Activated CD4-positive, alpha-beta T cell treated with anti-CD3 and anti-CD28 coated beads for 36 hours (primary cell): ENCODE measurements at regions of chr1 and their contacts with region 1.

Region 1: GRCh38 chr1:201191653-201192260 is 1.1 kb downstream of the IGFN1 start:
- DNase-seq: peak; percentile 81
- ATAC-seq: peak; percentile 100
- H3K4me3 Mint-ChIP-seq: no peak overlapping the region
- H3K27ac Mint-ChIP-seq: no peak overlapping the region
- H3K4me1 Mint-ChIP-seq: peaks cover 4% of the 10 kb centered on the region
- H3K27me3 Mint-ChIP-seq: peaks cover 13% of the 10 kb centered on the region

Region 2: GRCh38 chr1:200992382-200993048 is 199.2 kb before region 1 on chr1:
- CTCF ChIA-PET with region 1: no interaction called
- POLR2A ChIA-PET with region 1: no interaction called
- intact Hi-C with region 1: no loop called
- DNase-seq: no peak
- ATAC-seq: no peak
- H3K4me3 Mint-ChIP-seq: no peak overlapping the region
- H3K27ac Mint-ChIP-seq: no peak overlapping the region
- H3K4me1 Mint-ChIP-seq: no peaks in the 10 kb centered on the region
- H3K27me3 Mint-ChIP-seq: no peaks in the 10 kb centered on the region

Region 3: DNA sequence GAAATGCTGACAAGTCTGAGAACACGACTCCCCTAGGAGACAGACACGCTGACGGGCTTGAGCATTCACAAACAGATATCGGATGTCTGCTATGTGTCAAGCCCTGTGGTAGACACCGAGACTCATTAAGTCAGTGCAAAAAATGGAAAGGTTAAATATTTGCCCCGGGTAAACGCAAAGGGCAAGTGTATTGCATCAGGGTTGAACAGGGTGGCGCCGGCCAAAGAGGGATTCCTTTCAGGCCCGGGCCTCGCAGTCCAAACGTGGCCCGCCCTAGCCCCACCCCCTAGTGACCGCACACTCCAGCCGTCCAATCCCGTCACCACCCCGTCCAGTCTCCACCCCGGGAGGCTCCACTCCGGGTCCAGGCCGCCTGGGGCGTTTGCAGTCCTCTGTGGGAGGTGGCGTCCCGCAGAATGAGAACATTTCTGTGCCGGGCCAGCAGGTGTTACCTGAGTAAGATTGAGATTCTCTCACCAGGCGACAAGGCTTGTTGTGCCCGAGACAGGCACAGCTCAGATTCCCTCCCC is 21.2 kb before region 1 on chr1:
- CTCF ChIA-PET with region 1: interaction called, 3 read pairs
- POLR2A ChIA-PET with region 1: interaction called, 9 read pairs
- intact Hi-C with region 1: loop called in 1 of 2 experiments (anchors 1 kb)
- DNase-seq: peak; percentile 92
- ATAC-seq: peak; percentile 83
- H3K4me3 Mint-ChIP-seq: peak overlapping the region; percentile 71
- H3K27ac Mint-ChIP-seq: peak overlapping the region; percentile 90
- H3K4me1 Mint-ChIP-seq: peaks cover 21% of the 10 kb centered on the region
- H3K27me3 Mint-ChIP-seq: peaks cover 15% of the 10 kb centered on the region

Region 4: DNA sequence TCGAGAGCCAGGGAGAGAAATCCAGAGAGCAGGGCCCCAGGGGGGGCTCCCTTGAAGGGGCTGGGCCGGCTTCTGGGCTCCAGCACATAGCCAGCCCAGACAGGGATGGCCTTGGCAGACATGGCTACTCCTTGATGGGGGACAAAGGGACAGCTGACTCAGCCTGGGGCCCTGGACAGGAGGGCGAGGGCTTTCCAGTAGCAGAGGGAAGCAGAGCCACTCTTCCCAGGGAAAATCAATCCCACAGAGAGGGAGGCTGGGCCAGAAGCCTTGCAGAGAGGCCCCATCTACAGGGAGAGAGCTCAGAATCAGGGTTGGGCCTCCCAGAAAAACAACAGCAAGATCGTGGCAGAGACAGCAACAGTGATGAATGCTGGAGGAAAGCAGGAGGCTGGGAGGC is 14.4 kb after region 1 on chr1:
- CTCF ChIA-PET with region 1: no interaction called
- POLR2A ChIA-PET with region 1: no interaction called
- intact Hi-C with region 1: no loop called
- DNase-seq: no peak
- ATAC-seq: no peak
- H3K4me3 Mint-ChIP-seq: no peak overlapping the region
- H3K27ac Mint-ChIP-seq: no peak overlapping the region
- H3K4me1 Mint-ChIP-seq: no peaks in the 10 kb centered on the region
- H3K27me3 Mint-ChIP-seq: peaks cover 9% of the 10 kb centered on the region